ENCODE measurements at regions of chr2 and their contacts with region 1.

Region 1: DNA sequence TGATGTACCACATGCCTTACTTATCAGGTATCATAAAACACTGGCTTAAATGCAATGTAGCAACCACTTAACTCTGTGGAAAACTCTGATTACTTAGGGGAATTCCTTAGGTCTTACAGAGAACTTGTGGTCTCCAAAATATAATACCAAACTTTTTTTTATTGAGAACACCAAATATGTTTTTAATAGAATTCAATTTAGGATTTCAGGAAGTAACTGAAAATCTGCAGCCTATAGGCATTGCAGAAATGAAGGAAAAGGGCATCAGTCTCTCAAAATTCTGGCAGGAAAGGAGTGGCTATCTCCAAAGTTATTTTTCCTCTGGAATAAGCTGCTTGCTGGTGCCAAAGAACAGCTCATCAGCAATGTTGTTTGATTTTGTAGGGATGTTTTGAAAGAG is 105.3 kb upstream of the UGP2 start:
- DNase-seq: no peak
- ATAC-seq: no peak
- H3K4me3 ChIP-seq: no peak overlapping the region
- H3K27ac ChIP-seq: peak overlapping the region; percentile 74
- H3K4me1 ChIP-seq: peaks cover 72% of the 10 kb centered on the region
- H3K27me3 ChIP-seq: no peaks in the 10 kb centered on the region
- CTCF ChIP-seq: no peak
- EP300 ChIP-seq: no peak
- POLR2A ChIP-seq: no peak
- RAD21 ChIP-seq: no peak

Region 2: GRCh38 chr2:62435720-62436119 is 1300.6 kb before region 1 on chr2:
- CTCF ChIA-PET with region 1: no interaction called
- POLR2A ChIA-PET with region 1: no interaction called
- in situ Hi-C with region 1: no loop called
- intact Hi-C with region 1: no loop called
- DNase-seq: no peak
- ATAC-seq: no peak
- H3K4me3 ChIP-seq: no peak overlapping the region
- H3K27ac ChIP-seq: no peak overlapping the region
- H3K4me1 ChIP-seq: no peaks in the 10 kb centered on the region
- H3K27me3 ChIP-seq: peaks cover 4 to 18% of the 10 kb centered on the region in 2 experiments; a peak in 3 of 5 replicates
- CTCF ChIP-seq: no peak
- EP300 ChIP-seq: no peak
- POLR2A ChIP-seq: no peak
- RAD21 ChIP-seq: no peak

Region 3: GRCh38 chr2:63698825-63699548 is 37.4 kb before region 1 on chr2:
- CTCF ChIA-PET with region 1: no interaction called
- POLR2A ChIA-PET with region 1: interaction called, 11 read pairs
- in situ Hi-C with region 1: no loop called
- intact Hi-C with region 1: no loop called
- DNase-seq: peak; percentile 72
- ATAC-seq: peak; percentile 100
- H3K4me3 ChIP-seq: no peak overlapping the region
- H3K27ac ChIP-seq: no peak overlapping the region
- H3K4me1 ChIP-seq: peaks cover 21% of the 10 kb centered on the region
- H3K27me3 ChIP-seq: no peaks in the 10 kb centered on the region
- CTCF ChIP-seq: peak; percentile 91
- EP300 ChIP-seq: no peak
- POLR2A ChIP-seq: no peak
- RAD21 ChIP-seq: peak; percentile 87

Region 4: DNA sequence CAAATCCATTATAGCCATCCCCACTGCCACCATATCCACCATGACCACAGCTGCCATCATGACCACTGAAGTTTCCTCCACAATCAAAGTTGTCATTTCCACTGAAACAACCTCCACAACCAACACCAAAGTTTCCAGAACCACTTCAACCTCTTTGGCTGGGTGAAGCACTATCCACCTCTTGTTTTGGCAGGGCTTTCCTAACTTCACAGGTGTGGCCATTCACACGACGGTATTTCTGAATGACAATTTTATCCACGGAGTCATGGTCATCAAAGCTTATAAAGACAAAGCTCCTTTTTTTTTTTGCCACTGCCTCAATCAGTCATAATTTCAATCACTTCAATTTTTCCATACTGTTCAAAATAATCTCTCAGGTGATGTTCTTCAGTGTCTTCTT is 15.5 kb after region 1 on chr2:
- CTCF ChIA-PET with region 1: no interaction called
- POLR2A ChIA-PET with region 1: no interaction called
- in situ Hi-C with region 1: no loop called
- intact Hi-C with region 1: loop called (anchors 2 kb)
- DNase-seq: no peak
- ATAC-seq: no peak
- H3K4me3 ChIP-seq: no peak overlapping the region
- H3K27ac ChIP-seq: no peak overlapping the region
- H3K4me1 ChIP-seq: peaks cover 13% of the 10 kb centered on the region
- H3K27me3 ChIP-seq: no peaks in the 10 kb centered on the region
- CTCF ChIP-seq: no peak
- EP300 ChIP-seq: no peak
- POLR2A ChIP-seq: no peak
- RAD21 ChIP-seq: no peak

Region 5: DNA sequence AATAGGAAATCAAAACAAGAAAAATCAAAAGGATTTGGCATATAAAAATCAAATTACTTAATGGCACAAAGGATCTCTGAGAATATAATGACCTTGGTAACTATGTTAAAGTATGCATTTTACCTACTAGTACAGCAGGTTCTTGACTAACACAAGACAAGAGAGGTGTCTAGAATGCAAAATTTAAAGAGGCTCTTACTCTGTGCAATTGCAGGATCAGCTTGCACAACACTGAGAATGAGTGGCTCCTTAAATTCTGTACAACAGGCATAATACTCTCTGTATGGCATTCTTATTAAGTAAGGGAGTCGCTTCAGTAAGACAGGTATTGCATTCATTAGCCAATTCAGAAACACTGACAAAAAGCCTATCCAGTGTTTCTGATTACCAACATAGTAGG is 178.0 kb after region 1 on chr2:
- CTCF ChIA-PET with region 1: no interaction called
- POLR2A ChIA-PET with region 1: no interaction called
- in situ Hi-C with region 1: no loop called
- intact Hi-C with region 1: no loop called
- DNase-seq: no peak
- ATAC-seq: no peak
- H3K4me3 ChIP-seq: no peak overlapping the region
- H3K27ac ChIP-seq: no peak overlapping the region
- H3K4me1 ChIP-seq: no peaks in the 10 kb centered on the region
- H3K27me3 ChIP-seq: no peaks in the 10 kb centered on the region
- CTCF ChIP-seq: no peak
- EP300 ChIP-seq: no peak
- POLR2A ChIP-seq: no peak
- RAD21 ChIP-seq: no peak

Region 6: GRCh38 chr2:64157792-64158191 is 421.4 kb after region 1 on chr2:
- CTCF ChIA-PET with region 1: no interaction called
- POLR2A ChIA-PET with region 1: no interaction called
- in situ Hi-C with region 1: no loop called
- intact Hi-C with region 1: loop called (anchors 10 kb)
- DNase-seq: no peak
- ATAC-seq: no peak
- H3K4me3 ChIP-seq: no peak overlapping the region
- H3K27ac ChIP-seq: no peak overlapping the region
- H3K4me1 ChIP-seq: peaks cover 30% of the 10 kb centered on the region
- H3K27me3 ChIP-seq: peaks cover 0 to 10% of the 10 kb centered on the region in 2 experiments; a peak in 3 of 5 replicates
- CTCF ChIP-seq: no peak
- EP300 ChIP-seq: no peak
- POLR2A ChIP-seq: no peak
- RAD21 ChIP-seq: no peak

Measured in HepG2 (cell line).